ENCODE measurements at regions of chr6 and their contacts with region 1.

Region 1: GRCh38 chr6:25017932-25018567 is 82.3 kb upstream of the RIPOR2 start:
- DNase-seq: peak; percentile 55
- H3K4me3 ChIP-seq: no peak overlapping the region
- H3K27ac ChIP-seq: no peak overlapping the region
- H3K4me1 ChIP-seq: no peaks in the 10 kb centered on the region
- H3K27me3 ChIP-seq: no peaks in the 10 kb centered on the region
- CTCF ChIP-seq: peak in 1 of 3 experiments; percentile 39
- POLR2A ChIP-seq: no peak

Region 2: DNA sequence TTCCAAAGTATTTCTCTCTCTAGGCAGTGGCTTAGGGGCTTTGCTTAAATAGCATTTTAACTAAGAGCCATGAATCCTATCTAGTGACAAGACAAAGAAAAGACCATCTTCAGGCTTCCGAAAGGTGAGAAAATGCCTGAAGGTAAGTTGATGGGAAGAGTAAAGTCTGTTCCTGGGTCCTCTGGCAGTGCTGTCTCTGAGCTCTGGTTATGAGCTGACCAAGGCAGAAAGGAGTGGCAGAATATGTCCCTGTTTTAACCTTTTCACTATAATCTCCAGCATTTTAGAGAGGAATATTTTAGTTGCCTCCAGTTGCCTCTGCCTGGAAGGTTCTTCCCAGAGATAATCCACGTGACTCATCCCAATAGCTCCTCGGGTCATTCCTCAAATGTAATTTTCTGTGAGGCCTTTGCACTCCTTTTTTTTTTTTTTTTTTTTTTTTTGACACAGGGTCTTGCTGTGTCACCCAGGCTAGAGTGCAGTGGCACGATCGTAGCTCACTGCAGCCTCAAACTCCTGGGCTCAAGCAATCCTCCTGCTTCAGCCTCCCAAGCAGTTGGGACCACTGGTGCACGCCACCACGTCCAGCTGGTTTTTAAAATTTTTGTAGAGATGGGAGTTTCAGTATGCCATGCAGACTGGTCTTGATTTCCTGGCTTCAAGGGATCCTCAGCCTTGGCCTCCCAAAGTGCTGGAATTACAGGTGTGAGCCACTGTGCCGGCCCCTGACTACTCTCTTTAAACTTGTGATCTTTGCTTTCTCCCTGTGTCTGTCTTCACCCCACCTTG is 215.6 kb before region 1 on chr6:
- intact Hi-C with region 1: no loop called
- DNase-seq: no peak
- H3K4me3 ChIP-seq: no peak overlapping the region
- H3K27ac ChIP-seq: no peak overlapping the region
- H3K4me1 ChIP-seq: peaks cover 5% of the 10 kb centered on the region
- H3K27me3 ChIP-seq: no peaks in the 10 kb centered on the region
- CTCF ChIP-seq: no peak
- POLR2A ChIP-seq: no peak

Region 3: DNA sequence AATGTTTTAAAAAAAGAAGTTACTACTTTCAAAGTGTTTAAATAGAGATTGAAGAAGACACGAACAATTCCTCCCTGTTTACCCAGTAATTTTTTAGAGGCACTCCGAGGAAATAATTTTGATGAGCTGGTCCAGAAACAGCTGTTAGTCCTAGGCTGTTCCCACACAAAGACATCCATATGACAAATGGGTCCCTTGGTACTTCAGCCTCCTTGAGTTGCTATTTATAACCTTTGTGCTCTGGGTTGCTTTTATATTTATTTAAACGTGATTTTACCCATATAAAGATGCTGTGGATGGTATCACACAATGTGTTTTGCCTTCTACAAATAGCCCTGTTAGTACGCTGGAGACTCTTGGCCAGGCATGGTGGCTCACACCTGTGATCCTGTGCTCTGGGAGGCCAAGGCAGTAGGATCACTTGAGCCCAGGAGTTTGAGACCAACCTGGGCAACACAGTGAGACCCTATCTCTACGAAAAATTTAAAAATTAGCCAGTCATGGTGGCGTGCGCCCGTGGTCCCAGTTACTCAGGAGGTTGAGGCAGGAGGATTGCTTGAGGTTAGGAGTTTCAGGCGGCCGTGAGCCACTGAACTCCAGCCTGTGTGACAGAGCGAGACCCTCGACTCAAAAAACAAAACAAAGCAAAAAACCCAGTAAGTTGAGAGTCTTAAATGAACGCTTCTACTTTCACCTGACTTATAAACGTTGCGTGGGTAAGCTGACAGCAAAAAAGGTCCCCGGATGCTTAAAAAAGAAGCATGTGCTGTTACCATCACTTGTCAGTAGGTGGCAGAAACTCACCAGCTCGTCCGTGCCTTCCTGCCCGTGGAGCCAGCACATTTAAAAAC is 162.4 kb before region 1 on chr6:
- intact Hi-C with region 1: loop called (anchors 10 kb)
- DNase-seq: peak; percentile 80
- H3K4me3 ChIP-seq: peak overlapping the region in 1 of 2 donors; percentile 13
- H3K27ac ChIP-seq: peak overlapping the region in 1 of 2 donors; percentile 55
- H3K4me1 ChIP-seq: peaks cover 6% of the 10 kb centered on the region
- H3K27me3 ChIP-seq: no peaks in the 10 kb centered on the region
- CTCF ChIP-seq: peak; percentile 76 to 85 (median 82)
- POLR2A ChIP-seq: no peak